Breast epithelium (tissue), 4 donors: ENCODE measurements at regions of chr2 and their contacts with region 1.

Region 1: DNA sequence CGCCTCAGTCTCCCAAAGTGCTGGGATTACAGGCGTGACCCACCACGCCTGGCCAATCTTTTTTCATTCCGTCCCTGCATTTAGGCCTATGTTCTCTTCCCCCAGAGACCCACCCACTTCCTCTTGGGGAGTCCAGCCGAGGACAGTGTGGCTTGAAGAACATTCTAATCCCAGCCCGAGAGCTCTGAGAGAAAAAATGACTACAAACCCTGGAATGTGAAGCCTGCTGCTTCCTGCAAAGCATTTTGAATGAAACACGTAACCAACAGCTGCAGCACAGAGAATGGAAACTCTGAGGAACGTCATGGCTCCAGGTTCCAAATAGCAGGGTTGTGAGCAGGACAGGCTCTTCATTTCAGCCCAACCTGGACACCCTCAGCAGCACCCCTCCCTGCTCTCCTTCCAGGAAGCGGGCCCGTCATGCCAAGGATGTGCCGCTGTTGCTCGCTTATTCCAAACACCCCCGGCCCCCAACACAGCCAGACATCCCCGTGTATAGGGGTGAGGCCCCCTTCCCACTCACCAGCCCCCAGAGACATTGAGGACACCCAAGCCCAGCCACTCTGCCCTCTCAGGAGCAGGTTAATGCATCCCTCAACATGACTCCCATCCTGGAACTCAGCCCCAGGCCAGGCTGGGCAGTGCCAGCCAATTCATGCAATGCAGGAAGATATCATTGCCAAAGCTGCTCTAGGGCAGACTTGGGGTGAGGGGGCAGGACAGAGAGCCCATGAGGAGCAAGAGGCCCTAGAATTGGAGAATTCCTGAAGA is 139.8 kb downstream of the ZFP36L2 start:
- DNase-seq: peak in 1 of 2 donors; percentile 93
- H3K4me3 ChIP-seq: peak overlapping the region in 1 of 3 donors; percentile 31
- H3K27ac ChIP-seq: peak overlapping the region; percentile 93 to 99
- H3K4me1 ChIP-seq: peaks cover 37 to 41% of the 10 kb centered on the region in 2 donors
- H3K27me3 ChIP-seq: no peaks in the 10 kb centered on the region
- CTCF ChIP-seq: no peak
- POLR2A ChIP-seq: no peak

Region 2: DNA sequence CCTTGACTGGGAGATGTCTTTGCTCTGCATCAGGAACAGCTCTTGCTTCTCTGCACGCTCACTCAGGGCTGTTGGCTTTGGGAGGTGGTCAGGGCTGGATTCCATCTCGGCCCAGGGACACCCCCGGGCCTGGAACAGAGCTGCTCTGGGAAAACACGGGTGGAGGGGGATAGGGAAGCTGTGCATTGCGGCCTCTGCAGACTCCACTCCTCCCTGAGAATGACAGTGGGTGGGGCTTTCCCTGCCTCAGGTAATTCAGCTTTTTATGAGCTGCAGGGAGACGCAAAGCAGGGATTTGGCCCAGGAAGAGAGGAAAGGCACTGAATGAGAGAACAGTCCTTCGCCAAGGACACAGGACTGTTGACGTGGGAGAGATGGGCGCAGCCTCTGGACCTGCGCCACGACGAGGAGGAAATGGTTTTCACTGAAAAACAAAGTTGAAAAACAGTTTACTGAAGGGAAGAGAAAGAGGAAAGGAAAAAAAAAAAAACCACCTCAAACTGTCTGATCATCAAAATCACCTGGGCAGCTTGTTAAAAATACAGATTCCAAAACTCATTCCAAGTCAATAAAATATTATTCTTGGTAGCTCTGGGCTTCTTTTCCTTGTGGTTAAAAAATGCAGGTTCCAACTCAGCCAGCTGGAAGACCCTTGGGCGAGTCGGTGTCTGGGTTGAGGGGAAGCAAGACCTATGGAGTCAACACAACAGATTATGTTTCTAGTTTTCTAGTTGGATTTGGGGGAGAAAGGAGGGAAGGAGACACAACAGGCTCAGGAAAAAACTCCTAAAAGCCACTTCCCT is 54.2 kb before region 1 on chr2:
- intact Hi-C with region 1: loop called (anchors 10 kb)
- DNase-seq: peak in 1 of 2 donors; percentile 90
- H3K4me3 ChIP-seq: peak overlapping the region in 1 of 3 donors; percentile 17
- H3K27ac ChIP-seq: peak overlapping the region; percentile 95
- H3K4me1 ChIP-seq: peaks cover 4 to 10% of the 10 kb centered on the region in 2 donors
- H3K27me3 ChIP-seq: no peaks in the 10 kb centered on the region
- CTCF ChIP-seq: no peak
- POLR2A ChIP-seq: no peak